Psoas muscle (tissue), 8 donors: ENCODE measurements at regions of chr13 and their contacts with region 1.

Region 1: GRCh38 chr13:85806553-85807175 is 7.4 kb upstream of the SLITRK6 start:
- DNase-seq: no peak
- ATAC-seq: no peak
- H3K4me3 ChIP-seq: no peak overlapping the region
- H3K27ac ChIP-seq: no peak overlapping the region
- H3K4me1 ChIP-seq: no peaks in the 10 kb centered on the region
- H3K27me3 ChIP-seq: no peaks in the 10 kb centered on the region
- CTCF ChIP-seq: peak; percentile 41

Region 2: DNA sequence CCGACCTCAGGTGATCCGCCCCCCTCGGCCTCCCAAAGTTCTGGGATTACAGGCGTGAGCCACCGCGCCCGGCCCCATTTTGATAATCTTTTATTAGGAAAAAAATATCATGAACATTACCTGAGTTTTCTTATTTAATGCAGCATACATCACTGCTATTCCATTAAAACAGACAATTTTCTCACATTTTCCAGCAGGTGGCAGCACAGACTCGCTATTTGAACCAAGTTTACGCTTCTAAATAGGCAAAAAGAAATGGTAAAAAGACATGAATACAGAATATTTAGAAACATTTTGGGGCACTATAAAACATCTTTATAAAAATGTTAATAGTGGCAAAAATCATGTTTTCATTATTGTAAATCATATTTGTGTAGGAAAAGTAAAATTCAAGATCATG is 910.5 kb before region 1 on chr13:
- intact Hi-C with region 1: loop called in 1 of 2 experiments (anchors 5 kb)
- DNase-seq: no peak
- ATAC-seq: no peak
- H3K4me3 ChIP-seq: no peak overlapping the region
- H3K27ac ChIP-seq: no peak overlapping the region
- H3K4me1 ChIP-seq: no peaks in the 10 kb centered on the region
- H3K27me3 ChIP-seq: no peaks in the 10 kb centered on the region
- CTCF ChIP-seq: peak; percentile 44

Region 3: DNA sequence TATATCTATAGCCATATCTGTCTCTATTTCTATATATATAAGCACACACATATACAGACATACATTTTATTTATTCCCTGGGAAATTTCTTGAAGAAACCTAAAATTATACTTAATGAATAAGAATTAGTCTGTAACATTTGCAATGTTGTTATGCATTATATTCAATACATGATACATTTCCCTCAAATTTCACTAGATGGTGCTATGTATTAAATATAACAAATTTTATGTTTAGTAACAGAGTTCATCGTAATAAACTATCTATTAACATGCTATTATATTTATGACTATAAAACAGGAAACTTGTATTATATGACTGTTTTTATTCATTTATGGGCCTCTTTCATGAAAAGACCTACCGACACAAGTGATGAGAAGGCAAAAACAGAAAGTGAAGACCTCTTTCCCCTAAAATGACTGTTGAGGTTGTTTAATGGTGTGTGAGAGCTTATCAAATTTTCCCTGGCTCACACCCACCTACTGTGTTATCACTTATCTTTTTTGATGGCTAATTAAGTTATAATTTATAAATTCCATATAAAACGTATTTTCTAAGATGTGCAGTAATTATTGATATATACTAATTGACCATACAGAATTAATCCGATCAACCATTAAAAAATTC is 889.3 kb before region 1 on chr13:
- intact Hi-C with region 1: loop called in 1 of 2 experiments (anchors 10 kb)
- DNase-seq: no peak
- ATAC-seq: no peak
- H3K4me3 ChIP-seq: no peak overlapping the region
- H3K27ac ChIP-seq: no peak overlapping the region
- H3K4me1 ChIP-seq: no peaks in the 10 kb centered on the region
- H3K27me3 ChIP-seq: no peaks in the 10 kb centered on the region
- CTCF ChIP-seq: peak; percentile 9